Activated CD4-positive, alpha-beta memory T cell treated with anti-CD3 and anti-CD28 coated beads for 36 hours (primary cell): ENCODE measurements at regions of chr2 and their contacts with region 1.

Region 1: DNA sequence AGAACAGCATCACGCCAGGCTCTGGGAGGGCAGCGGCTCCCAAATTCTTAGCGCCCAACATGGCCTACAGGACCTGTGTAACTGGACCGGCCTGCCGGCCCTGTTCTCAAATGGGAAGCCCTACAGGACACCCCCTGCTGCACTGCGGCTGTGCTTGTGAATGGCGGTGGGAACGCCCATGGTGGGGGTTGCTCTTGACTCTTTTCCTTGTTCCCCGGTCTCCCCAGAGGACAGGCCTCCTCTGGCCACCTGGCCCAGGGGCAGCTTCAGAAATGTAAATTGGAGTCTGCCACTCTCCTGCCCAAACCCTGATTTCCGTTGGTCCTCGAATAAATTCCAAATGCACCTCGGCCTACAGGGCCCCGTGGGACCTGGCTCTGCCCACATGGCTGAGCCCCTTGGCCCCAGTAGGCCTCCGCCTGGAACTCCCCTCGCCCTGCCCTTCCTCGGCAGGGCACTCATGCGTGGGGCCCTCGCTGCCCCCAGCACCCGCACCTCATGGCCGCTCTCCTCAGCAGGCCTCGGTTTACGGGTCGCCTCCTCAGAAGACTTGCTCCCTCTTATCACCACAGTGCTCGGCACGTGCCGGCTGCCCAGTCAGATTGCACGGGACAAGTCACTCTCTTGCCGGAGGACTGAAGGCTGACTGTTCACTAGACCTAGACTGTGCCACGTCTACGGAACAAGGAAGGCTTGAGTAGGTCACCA is 29.4 kb downstream of the KCNIP3 start:
- DNase-seq: no peak
- H3K4me3 Mint-ChIP-seq: no peak overlapping the region
- H3K27ac Mint-ChIP-seq: no peak overlapping the region
- H3K4me1 Mint-ChIP-seq: no peaks in the 10 kb centered on the region
- H3K27me3 Mint-ChIP-seq: no peaks in the 10 kb centered on the region

Region 2: GRCh38 chr2:95314964-95315611 is 11.5 kb before region 1 on chr2:
- CTCF ChIA-PET with region 1: no interaction called
- POLR2A ChIA-PET with region 1: no interaction called
- intact Hi-C with region 1: loop called (anchors 1 kb)
- DNase-seq: no peak
- H3K4me3 Mint-ChIP-seq: no peak overlapping the region
- H3K27ac Mint-ChIP-seq: no peak overlapping the region
- H3K4me1 Mint-ChIP-seq: no peaks in the 10 kb centered on the region
- H3K27me3 Mint-ChIP-seq: peaks cover 3% of the 10 kb centered on the region

Region 3: DNA sequence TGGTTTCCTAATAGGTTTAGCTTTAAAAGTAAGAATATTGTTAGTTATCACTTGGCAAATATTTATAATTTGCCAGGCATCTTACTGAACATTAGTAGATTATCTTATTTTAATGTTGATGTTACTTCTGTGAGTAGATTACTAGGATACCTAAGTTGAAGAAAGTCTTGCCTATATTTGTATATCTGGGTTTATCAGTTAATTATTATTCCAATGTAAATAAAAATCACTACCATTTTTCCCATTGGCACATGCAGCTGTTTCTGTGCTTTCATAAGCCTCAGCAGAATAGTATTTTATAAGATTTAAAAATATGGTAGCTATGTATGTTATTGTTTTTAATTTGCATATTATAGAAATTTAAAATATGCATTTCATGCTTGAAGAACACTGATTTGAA is 174.3 kb after region 1 on chr2:
- CTCF ChIA-PET with region 1: no interaction called
- POLR2A ChIA-PET with region 1: no interaction called
- intact Hi-C with region 1: no loop called
- DNase-seq: no peak
- H3K4me3 Mint-ChIP-seq: no peak overlapping the region
- H3K27ac Mint-ChIP-seq: no peak overlapping the region
- H3K4me1 Mint-ChIP-seq: no peaks in the 10 kb centered on the region
- H3K27me3 Mint-ChIP-seq: peaks cover 7% of the 10 kb centered on the region